ENCODE measurements at regions of chr15 and their contacts with region 1.

Region 1: GRCh38 chr15:71730277-71731144 is 79.8 kb upstream of the NR2E3 start:
- ATAC-seq: peak; percentile 42 to 80 (median 64)
- H3K4me3 ChIP-seq: no peak overlapping the region
- H3K27ac ChIP-seq: no peak overlapping the region
- H3K4me1 ChIP-seq: no peaks in the 10 kb centered on the region

Region 2: DNA sequence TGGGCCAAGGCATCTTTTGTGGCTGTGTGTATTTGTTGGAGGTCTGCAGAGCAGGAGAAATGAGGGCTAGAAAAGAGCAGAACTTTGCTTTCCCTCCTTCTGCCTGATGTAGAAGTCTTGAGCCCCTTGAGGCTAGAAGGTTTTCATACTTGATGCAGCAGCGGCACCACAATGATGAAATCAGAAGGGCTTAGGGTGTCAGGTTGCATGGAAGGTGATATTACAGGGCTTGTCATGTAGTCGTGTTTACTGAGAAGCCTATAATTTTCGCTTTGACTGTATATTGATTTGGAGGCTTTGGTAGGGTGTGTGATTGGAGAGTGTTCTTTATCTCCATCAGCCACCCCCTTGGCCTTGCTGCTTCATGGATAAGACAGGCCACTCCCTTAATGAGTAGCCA is 275.4 kb before region 1 on chr15:
- in situ Hi-C with region 1: loop called in 1 of 9 experiments (anchors 10 kb)
- ATAC-seq: peak in 2 of 8 experiments; percentile 24 to 68
- H3K4me3 ChIP-seq: no peak overlapping the region
- H3K27ac ChIP-seq: no peak overlapping the region
- H3K4me1 ChIP-seq: peaks cover 0 to 5% of the 10 kb centered on the region in 2 donors

Region 3: DNA sequence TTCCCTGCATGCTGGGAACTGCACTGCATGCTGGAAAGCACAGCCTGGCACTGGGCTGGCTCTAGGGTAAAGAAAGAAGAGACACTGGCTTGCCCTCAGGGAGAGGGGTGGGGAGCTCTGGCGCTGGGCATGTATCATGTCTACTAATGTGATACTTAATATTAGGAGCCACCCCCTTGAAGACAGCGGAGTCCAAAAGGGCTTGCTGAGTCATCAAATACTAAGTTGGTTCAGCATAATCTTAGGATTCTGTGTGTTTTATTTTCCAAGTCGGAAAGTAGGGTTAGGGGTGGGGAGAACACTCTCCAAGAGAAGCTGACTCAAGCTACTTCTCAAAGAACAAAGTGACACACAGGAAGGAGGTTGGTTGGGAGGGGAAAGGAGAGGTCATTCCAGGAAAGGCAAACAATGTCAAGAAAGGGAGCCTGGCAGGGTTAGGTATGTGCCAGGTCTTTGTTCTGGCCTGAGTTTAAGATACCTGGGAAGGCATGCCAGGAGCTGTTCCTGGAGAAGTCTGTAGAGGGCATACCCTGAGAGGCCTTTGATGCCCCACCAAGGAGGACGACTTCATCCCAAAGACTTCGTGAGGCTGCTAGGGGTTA is 158.0 kb before region 1 on chr15:
- in situ Hi-C with region 1: loop called in 1 of 9 experiments (anchors 25 kb)
- ATAC-seq: peak in 3 of 8 experiments; percentile 35 to 74 (median 62)
- H3K4me3 ChIP-seq: no peak overlapping the region
- H3K27ac ChIP-seq: no peak overlapping the region
- H3K4me1 ChIP-seq: no peaks in the 10 kb centered on the region

Region 4: DNA sequence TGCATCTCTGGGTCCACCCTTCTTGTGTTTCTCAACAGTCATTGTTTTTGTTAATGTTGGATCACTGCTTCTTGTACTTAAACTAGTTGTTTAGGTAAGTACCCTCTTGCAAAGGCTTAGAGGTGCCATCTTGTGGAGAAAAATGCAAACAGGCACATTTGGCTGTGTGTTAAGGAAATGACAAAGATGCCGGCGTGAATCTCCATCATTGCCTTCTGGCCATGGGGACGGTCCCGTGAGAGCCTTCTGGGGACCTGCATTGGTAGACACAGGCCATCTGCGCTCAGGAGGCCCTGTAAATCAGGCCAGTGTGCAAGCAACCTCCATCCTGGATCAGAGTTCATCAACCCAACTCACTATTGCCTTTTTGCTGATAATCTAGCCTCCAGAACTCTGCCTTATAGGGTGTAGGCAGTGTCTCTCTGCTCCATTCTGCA is 78.7 kb before region 1 on chr15:
- in situ Hi-C with region 1: loop called in 1 of 9 experiments (anchors 10 kb)
- ATAC-seq: peak; percentile 48 to 98 (median 72)
- H3K4me3 ChIP-seq: no peak overlapping the region
- H3K27ac ChIP-seq: no peak overlapping the region
- H3K4me1 ChIP-seq: peaks cover 9 to 11% of the 10 kb centered on the region in 2 donors